PC-9 (cell line): ENCODE measurements at regions of chr5 and their contacts with region 1.

Region 1: GRCh38 chr5:82905986-82906385 is 171.2 kb downstream of the TMEM167A start:
- DNase-seq: no peak
- H3K4me3 ChIP-seq: no peak overlapping the region
- H3K27ac ChIP-seq: no peak overlapping the region
- H3K4me1 ChIP-seq: no peaks in the 10 kb centered on the region
- H3K27me3 ChIP-seq: no peaks in the 10 kb centered on the region
- CTCF ChIP-seq: no peak

Region 2: GRCh38 chr5:82886911-82887310 is 19.1 kb before region 1 on chr5:
- CTCF ChIA-PET with region 1: no interaction called
- POLR2A ChIA-PET with region 1: no interaction called
- intact Hi-C with region 1: loop called (anchors 1 kb)
- DNase-seq: no peak
- H3K4me3 ChIP-seq: no peak overlapping the region
- H3K27ac ChIP-seq: no peak overlapping the region
- H3K4me1 ChIP-seq: no peaks in the 10 kb centered on the region
- H3K27me3 ChIP-seq: no peaks in the 10 kb centered on the region
- CTCF ChIP-seq: no peak